A673 (cell line): ENCODE measurements at regions of chr6 and their contacts with region 1.

Region 1: GRCh38 chr6:77457720-77458349 is 5.5 kb downstream of the HTR1B start:
- DNase-seq: peak; percentile 79
- H3K4me3 ChIP-seq: no peak overlapping the region
- H3K27ac ChIP-seq: peak overlapping the region; percentile 55
- H3K4me1 ChIP-seq: peaks cover 11% of the 10 kb centered on the region
- H3K27me3 ChIP-seq: peaks cover 19% of the 10 kb centered on the region
- CTCF ChIP-seq: peak; percentile 71

Region 2: DNA sequence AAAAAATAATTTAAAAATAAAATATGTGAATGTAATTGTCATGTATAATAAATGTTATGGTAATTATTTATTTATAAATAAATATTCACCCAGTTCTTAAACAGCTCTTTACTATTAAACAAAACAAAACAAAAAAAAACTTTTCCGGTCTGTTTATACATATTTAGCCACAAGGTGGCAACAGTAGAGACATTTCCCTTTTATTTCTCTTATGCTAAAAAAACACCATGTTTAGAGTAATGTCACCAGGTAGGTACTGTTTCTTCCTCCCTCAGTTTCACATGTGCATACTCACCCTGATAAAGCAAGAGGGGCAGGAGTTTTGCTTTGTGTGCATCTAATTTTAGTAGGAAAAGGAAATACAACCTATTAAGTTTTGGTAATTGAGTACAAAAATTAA is 775.0 kb before region 1 on chr6:
- CTCF ChIA-PET with region 1: no interaction called
- POLR2A ChIA-PET with region 1: no interaction called
- intact Hi-C with region 1: loop called (anchors 5 kb)
- DNase-seq: peak; percentile 6
- H3K4me3 ChIP-seq: no peak overlapping the region
- H3K27ac ChIP-seq: no peak overlapping the region
- H3K4me1 ChIP-seq: no peaks in the 10 kb centered on the region
- H3K27me3 ChIP-seq: no peaks in the 10 kb centered on the region
- CTCF ChIP-seq: peak; percentile 51; the same call in 1 of the 2 replicates